Activated naive CD8-positive, alpha-beta T cell treated with anti-CD3 and anti-CD28 coated beads, Interleukin-2, amount 10 ng/mL, durations not matched to agents 7 days and 5 days (primary cell): ENCODE measurements at regions of chr13 and their contacts with region 1.

Region 1: GRCh38 chr13:100674848-100675660 is 459 bp upstream of the TMTC4 start:
- DNase-seq: peak; percentile 100
- ATAC-seq: peak; percentile 93
- H3K4me3 Mint-ChIP-seq: peak overlapping the region; percentile 80
- H3K27ac Mint-ChIP-seq: peak overlapping the region; percentile 81
- H3K4me1 Mint-ChIP-seq: peaks cover 26% of the 10 kb centered on the region
- H3K27me3 Mint-ChIP-seq: peaks cover 3% of the 10 kb centered on the region

Region 2: DNA sequence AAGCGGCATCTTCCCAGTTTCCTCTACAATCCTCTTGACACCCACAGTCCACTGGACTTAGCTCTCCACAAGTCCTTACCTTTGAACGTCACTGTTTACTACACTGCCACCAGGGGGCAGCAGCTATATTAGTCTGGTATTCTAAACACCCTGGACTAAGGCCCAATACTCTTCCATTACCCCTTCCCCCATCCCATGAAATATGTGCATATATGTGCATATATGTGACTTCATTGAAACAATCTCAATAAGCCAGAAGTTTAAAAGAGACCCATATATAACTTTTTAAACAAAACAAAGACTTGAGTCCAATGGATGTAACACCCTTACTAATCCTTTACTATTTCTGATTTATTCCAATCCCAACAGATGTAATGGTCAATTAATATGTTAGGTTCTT is 101.9 kb before region 1 on chr13:
- POLR2A ChIA-PET with region 1: interaction called, 15 read pairs
- DNase-seq: peak; percentile 61
- ATAC-seq: peak; percentile 86
- H3K4me3 Mint-ChIP-seq: no peak overlapping the region
- H3K27ac Mint-ChIP-seq: no peak overlapping the region
- H3K4me1 Mint-ChIP-seq: peaks cover 26% of the 10 kb centered on the region
- H3K27me3 Mint-ChIP-seq: no peaks in the 10 kb centered on the region

Region 3: GRCh38 chr13:100588331-100589177 is 86.5 kb before region 1 on chr13 and contains the start of gene GGACT:
- POLR2A ChIA-PET with region 1: interaction called, 15 read pairs
- DNase-seq: peak; percentile 95
- ATAC-seq: peak; percentile 90
- H3K4me3 Mint-ChIP-seq: peak within 1 kb of the TSS; percentile 83
- H3K27ac Mint-ChIP-seq: peak within 1 kb of the TSS; percentile 95
- H3K4me1 Mint-ChIP-seq: peaks cover 48% of the 10 kb centered on the region
- H3K27me3 Mint-ChIP-seq: no peaks in the 10 kb centered on the region
- total RNA-seq, gene GGACT: 3.1 to 4.1 TPM